Panc1 (cell line): ENCODE measurements at regions of chr5 and their contacts with region 1.

Region 1: GRCh38 chr5:64207978-64208377 is 42.3 kb downstream of the RNF180 start:
- DNase-seq: no peak
- ATAC-seq: no peak
- H3K4me3 ChIP-seq: no peak overlapping the region
- H3K27ac ChIP-seq: no peak overlapping the region
- H3K4me1 ChIP-seq: no peaks in the 10 kb centered on the region
- H3K27me3 ChIP-seq: no peaks in the 10 kb centered on the region
- CTCF ChIP-seq: peak; percentile 21; the same call in 1 of the 2 replicates

Region 2: DNA sequence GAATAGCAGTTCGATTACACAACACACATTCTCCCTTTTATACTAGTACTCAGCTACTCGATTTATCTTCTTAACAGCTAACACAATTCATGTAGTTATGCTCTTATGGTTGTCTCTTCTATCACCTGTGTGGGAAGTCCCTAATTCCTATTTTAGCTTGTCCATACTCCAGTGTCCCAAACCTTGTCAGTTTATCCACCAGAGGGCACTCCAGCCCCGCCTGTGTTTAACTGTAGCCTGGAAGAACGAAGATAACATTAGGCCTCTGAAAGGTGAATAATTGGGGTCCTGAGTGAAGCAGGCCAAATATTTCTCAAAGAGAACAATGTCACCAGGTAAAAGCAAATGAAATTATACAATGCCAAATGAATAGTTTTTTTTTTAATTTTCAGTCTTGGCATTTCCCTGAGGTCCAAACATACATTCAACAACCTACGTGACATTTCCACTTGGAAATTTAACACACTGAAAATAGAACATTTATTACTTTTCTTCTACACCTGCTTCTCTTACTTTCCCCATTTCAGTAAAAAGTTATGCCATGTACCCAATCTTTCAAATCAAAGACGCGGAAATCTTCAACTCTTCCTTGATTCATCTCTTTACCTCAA is 806.4 kb before region 1 on chr5:
- CTCF ChIA-PET with region 1: no interaction called
- POLR2A ChIA-PET with region 1: no interaction called
- in situ Hi-C with region 1: no loop called
- intact Hi-C with region 1: loop called (anchors 5 kb)
- DNase-seq: peak; percentile 22
- ATAC-seq: peak; percentile 91
- H3K4me3 ChIP-seq: no peak overlapping the region
- H3K27ac ChIP-seq: no peak overlapping the region
- H3K4me1 ChIP-seq: no peaks in the 10 kb centered on the region
- H3K27me3 ChIP-seq: no peaks in the 10 kb centered on the region
- CTCF ChIP-seq: peak; percentile 84

Region 3: GRCh38 chr5:64074533-64074932 is 133.4 kb before region 1 on chr5:
- CTCF ChIA-PET with region 1: no interaction called
- POLR2A ChIA-PET with region 1: no interaction called
- in situ Hi-C with region 1: no loop called
- intact Hi-C with region 1: loop called (anchors 5 kb)
- DNase-seq: peak; percentile 15
- ATAC-seq: peak; percentile 79
- H3K4me3 ChIP-seq: no peak overlapping the region
- H3K27ac ChIP-seq: no peak overlapping the region
- H3K4me1 ChIP-seq: no peaks in the 10 kb centered on the region
- H3K27me3 ChIP-seq: no peaks in the 10 kb centered on the region
- CTCF ChIP-seq: peak; percentile 62; the same call in 1 of the 2 replicates

Region 4: DNA sequence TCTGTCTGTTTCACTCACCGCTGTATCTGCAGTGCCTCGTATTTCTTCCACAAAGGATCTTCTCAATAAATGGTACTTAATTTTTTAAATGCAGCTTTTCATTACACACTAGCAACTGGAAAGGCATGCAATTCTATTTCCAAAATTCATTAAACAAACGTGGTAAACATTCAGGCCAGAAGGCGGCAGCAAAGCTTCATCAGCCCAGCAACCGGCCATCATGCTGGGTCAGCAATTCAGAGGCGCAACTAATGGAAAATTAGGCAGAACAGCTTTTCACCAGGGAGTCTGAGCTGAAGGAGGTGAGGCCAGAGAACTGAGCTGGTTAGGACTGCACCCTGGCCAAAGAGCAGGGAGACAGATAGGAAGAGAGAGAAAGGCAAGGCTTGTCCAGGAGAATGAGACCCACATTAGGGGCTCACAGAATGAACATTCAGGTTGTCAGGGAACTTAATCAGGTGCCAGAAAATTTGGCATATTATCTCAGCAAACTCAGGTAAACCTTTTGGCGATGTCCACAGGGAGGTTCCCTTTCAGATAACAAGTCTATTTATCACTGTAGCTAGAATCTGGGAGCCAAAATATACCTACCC is 60.0 kb before region 1 on chr5:
- CTCF ChIA-PET with region 1: no interaction called
- POLR2A ChIA-PET with region 1: no interaction called
- in situ Hi-C with region 1: no loop called
- intact Hi-C with region 1: loop called (anchors 2 kb)
- DNase-seq: peak; percentile 24
- ATAC-seq: peak; percentile 71; the same call in 1 of the 2 replicates
- H3K4me3 ChIP-seq: no peak overlapping the region
- H3K27ac ChIP-seq: no peak overlapping the region
- H3K4me1 ChIP-seq: no peaks in the 10 kb centered on the region
- H3K27me3 ChIP-seq: no peaks in the 10 kb centered on the region
- CTCF ChIP-seq: peak; percentile 90

Region 5: GRCh38 chr5:64370721-64371120 is 162.7 kb after region 1 on chr5:
- CTCF ChIA-PET with region 1: no interaction called
- POLR2A ChIA-PET with region 1: no interaction called
- in situ Hi-C with region 1: no loop called
- intact Hi-C with region 1: no loop called
- DNase-seq: no peak
- ATAC-seq: no peak
- H3K4me3 ChIP-seq: no peak overlapping the region
- H3K27ac ChIP-seq: no peak overlapping the region
- H3K4me1 ChIP-seq: no peaks in the 10 kb centered on the region
- H3K27me3 ChIP-seq: no peaks in the 10 kb centered on the region
- CTCF ChIP-seq: no peak

Region 6: GRCh38 chr5:64384761-64385160 is 176.8 kb after region 1 on chr5:
- CTCF ChIA-PET with region 1: no interaction called
- POLR2A ChIA-PET with region 1: no interaction called
- in situ Hi-C with region 1: no loop called
- intact Hi-C with region 1: no loop called
- DNase-seq: no peak
- ATAC-seq: no peak
- H3K4me3 ChIP-seq: no peak overlapping the region
- H3K27ac ChIP-seq: no peak overlapping the region
- H3K4me1 ChIP-seq: no peaks in the 10 kb centered on the region
- H3K27me3 ChIP-seq: no peaks in the 10 kb centered on the region
- CTCF ChIP-seq: peak; percentile 17; the same call in 1 of the 2 replicates